Tibial artery (tissue), 4 donors: ENCODE measurements at regions of chr12 and their contacts with region 1.

Region 1: GRCh38 chr12:57452937-57453509 is 2.1 kb upstream of the INHBE start:
- DNase-seq: peak; percentile 81 to 86
- H3K4me3 ChIP-seq: no peak overlapping the region
- H3K27ac ChIP-seq: peak overlapping the region; percentile 82 to 89
- H3K4me1 ChIP-seq: peaks cover 0 to 25% (median 18%) of the 10 kb centered on the region in 4 donors
- H3K27me3 ChIP-seq: peaks cover 0 to 3% of the 10 kb centered on the region in 2 donors
- CTCF ChIP-seq: peak; percentile 93 to 97

Region 2: DNA sequence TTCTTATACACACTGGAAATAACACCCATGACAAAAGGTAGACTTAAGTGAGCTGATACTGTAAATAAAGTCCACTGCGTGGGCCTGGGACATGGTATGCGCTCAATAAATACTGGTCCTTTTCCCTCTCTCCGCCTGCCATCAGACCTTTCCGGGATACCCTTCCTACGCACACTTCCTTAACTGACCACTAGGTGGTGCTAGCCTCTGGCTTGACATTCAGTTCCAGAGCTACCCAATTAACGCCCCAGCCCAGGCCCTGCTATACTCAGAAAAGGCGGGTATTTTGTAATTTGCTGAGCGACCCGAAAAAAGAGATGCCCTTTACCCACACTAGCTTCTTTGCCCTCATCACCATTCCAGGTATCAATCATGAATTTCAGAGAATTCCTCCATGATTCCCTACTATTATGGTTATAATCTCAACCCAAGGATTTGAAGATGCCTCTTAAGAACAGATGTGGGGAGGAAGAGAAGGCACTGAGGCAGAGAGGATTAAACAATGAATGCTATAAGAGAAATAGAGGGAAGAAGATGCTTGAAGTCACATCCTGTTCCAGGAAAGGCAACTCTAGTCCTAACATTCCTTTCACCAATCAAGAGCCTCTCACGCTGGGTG is 328.7 kb before region 1 on chr12:
- intact Hi-C with region 1: loop called (anchors 5 kb)
- DNase-seq: peak; percentile 83 to 85
- H3K4me3 ChIP-seq: no peak overlapping the region
- H3K27ac ChIP-seq: no peak overlapping the region
- H3K4me1 ChIP-seq: peaks cover 0 to 13% (median 8%) of the 10 kb centered on the region in 4 donors
- H3K27me3 ChIP-seq: no peaks in the 10 kb centered on the region
- CTCF ChIP-seq: peak; percentile 95 to 97

Region 3: GRCh38 chr12:57268264-57268663 is 184.8 kb before region 1 on chr12:
- intact Hi-C with region 1: loop called (anchors 5 kb)
- DNase-seq: no peak
- H3K4me3 ChIP-seq: no peak overlapping the region
- H3K27ac ChIP-seq: no peak overlapping the region
- H3K4me1 ChIP-seq: peaks cover 0 to 4% (median 0%) of the 10 kb centered on the region in 4 donors
- H3K27me3 ChIP-seq: no peaks in the 10 kb centered on the region
- CTCF ChIP-seq: no peak

Region 4: GRCh38 chr12:57309420-57309819 is 143.6 kb before region 1 on chr12:
- intact Hi-C with region 1: loop called (anchors 1 kb)
- DNase-seq: no peak
- H3K4me3 ChIP-seq: no peak overlapping the region
- H3K27ac ChIP-seq: peak overlapping the region; percentile 22 to 57
- H3K4me1 ChIP-seq: peaks cover 0 to 24% (median 10%) of the 10 kb centered on the region in 4 donors
- H3K27me3 ChIP-seq: no peaks in the 10 kb centered on the region
- CTCF ChIP-seq: no peak

Region 5: DNA sequence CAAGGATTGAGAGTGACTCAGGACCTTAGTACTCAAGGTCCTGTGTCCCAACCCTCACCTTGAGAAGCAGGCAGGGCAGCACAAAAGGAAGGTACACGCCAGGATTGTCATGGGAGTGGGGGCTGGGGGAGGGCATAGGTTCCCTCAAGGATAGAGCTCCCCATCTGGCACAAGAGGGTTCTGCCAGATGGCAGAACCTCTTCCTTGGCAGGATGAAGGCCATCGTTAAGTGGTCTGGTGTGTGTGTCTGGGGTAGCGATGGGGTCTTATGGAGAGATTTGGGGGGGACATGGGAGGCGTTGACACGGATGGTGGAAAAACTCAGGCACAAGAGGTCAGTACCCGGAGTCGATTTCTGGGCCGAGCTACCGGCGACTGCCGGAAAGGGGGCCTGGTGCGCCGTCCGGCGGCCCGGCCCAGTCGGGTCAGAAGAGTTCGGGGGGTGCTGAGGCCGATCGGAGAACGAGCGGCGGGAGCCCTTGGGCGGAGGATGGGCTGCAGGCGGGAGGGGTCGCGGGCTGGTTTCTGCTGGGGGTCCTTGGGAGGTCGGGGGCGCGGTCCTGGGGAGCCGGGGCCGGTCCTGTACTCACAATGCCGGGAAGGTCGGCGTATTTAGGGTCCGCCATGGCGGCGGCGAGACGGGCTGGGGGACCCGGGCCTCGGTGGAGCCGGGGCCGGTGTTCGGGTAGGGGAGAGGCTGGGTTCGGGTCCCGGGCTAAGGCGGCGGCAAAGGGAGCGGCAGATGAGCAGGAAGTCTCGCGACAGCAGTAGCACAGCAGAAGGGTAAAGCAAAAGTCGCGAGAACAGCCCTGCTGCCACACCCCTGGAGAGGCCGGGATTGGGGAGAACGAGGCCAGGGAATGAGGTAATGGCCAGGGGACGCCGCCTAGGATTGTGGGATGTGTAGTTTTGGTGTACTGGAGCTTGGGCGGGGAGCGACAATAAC is 93.7 kb after region 1 on chr12 and contains the start of gene DCTN2:
- intact Hi-C with region 1: no loop called
- DNase-seq: peak; percentile 98
- H3K4me3 ChIP-seq: peak within 1 kb of the TSS; percentile 96 to 97
- H3K27ac ChIP-seq: peak within 1 kb of the TSS; percentile 89 to 90
- H3K4me1 ChIP-seq: peaks cover 0 to 40% (median 28%) of the 10 kb centered on the region in 4 donors
- H3K27me3 ChIP-seq: peaks cover 0 to 27% of the 10 kb centered on the region in 2 donors
- CTCF ChIP-seq: no peak

Region 6: GRCh38 chr12:57771708-57772428 is 318.8 kb after region 1 on chr12 and contains the start of gene METTL1:
- intact Hi-C with region 1: no loop called
- DNase-seq: peak; percentile 96 to 97
- H3K4me3 ChIP-seq: peak within 1 kb of the TSS; percentile 68 to 90
- H3K27ac ChIP-seq: peak within 1 kb of the TSS; percentile 91 to 92
- H3K4me1 ChIP-seq: peaks cover 0 to 27% (median 20%) of the 10 kb centered on the region in 4 donors
- H3K27me3 ChIP-seq: no peaks in the 10 kb centered on the region
- CTCF ChIP-seq: no peak